ENCODE measurements at regions of chr14 and their contacts with region 1.

Region 1: DNA sequence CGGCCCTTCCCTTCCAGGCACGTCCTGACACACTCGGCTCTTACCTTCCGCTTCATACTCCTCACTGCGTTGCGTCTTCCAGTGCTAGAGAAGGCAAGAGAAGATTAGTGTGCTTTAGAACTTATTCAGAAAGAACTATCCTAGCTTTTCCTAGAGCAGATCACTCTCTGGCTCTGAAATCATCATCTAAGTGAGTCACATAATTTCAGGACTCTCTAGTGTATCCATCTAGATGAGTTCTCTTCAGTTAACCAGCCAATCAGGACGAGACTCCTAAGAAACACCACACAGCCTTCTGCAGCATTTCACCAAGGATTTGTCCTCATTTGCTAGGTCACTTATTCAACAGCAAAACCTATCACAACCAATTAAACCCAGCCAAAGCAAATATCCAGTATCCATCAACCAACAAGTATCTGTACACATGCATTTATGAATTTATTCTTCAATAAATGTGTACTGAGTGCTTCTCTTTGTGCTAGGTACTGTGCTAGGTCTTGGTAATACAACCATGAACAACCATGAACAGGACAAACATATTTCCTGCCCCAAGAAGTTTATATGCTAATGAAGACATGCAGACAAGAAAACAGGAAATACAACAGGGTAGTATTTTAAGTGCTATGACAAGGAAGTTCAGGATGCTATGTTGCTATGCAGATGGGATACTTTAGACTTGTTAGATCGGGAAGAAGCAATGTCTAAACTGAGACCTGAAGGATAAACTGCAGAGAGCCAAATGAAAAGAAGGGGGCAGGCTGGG is 52.1 kb downstream of the NIN start:
- DNase-seq: no peak
- ATAC-seq: no peak
- H3K4me3 ChIP-seq: no peak overlapping the region
- H3K27ac ChIP-seq: no peak overlapping the region; the same call in 1 of the 2 replicates
- H3K4me1 ChIP-seq: no peaks in the 10 kb centered on the region; the same call in 1 of the 2 replicates
- H3K27me3 ChIP-seq: no peaks in the 10 kb centered on the region
- CTCF ChIP-seq: no peak
- EP300 ChIP-seq: no peak
- POLR2A ChIP-seq: no peak
- RAD21 ChIP-seq: no peak

Region 2: GRCh38 chr14:50569714-50570274 is 209.1 kb before region 1 on chr14:
- CTCF ChIA-PET with region 1: interaction called, 11 read pairs
- POLR2A ChIA-PET with region 1: no interaction called
- RAD21 ChIA-PET with region 1: interaction called, 3 read pairs
- SMC1A ChIA-PET with region 1: interaction called, 3 read pairs
- in situ Hi-C with region 1: no loop called
- intact Hi-C with region 1: no loop called
- DNase-seq: no peak
- ATAC-seq: no peak
- H3K4me3 ChIP-seq: no peak overlapping the region
- H3K27ac ChIP-seq: no peak overlapping the region
- H3K4me1 ChIP-seq: no peaks in the 10 kb centered on the region
- H3K27me3 ChIP-seq: no peaks in the 10 kb centered on the region
- CTCF ChIP-seq: no peak
- EP300 ChIP-seq: no peak
- POLR2A ChIP-seq: no peak
- RAD21 ChIP-seq: no peak

Region 3: DNA sequence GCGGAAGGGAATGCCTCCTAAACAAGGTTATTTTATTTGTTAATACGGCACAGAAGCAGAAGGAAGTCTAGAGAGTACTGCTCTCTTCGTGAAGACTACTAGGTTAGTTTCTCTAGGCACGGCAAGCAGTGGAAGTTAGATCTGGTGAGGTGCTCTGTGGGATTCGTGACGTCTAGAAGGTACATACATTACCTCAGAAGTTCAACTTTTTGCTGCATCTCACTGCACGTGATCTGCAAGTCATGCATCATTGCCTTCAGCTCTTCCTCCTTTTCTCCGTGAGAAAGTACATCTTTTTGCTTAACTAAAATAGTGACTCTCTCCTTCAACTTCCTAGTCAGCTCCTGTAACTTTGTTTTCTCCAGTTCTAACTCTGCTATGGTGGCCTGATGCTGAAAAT is 22.6 kb before region 1 on chr14:
- CTCF ChIA-PET with region 1: interaction called, 140 read pairs
- POLR2A ChIA-PET with region 1: no interaction called
- RAD21 ChIA-PET with region 1: interaction called, 4 read pairs
- SMC1A ChIA-PET with region 1: interaction called, 87 read pairs
- in situ Hi-C with region 1: no loop called
- intact Hi-C with region 1: no loop called
- DNase-seq: no peak
- ATAC-seq: peak; percentile 75
- H3K4me3 ChIP-seq: no peak overlapping the region
- H3K27ac ChIP-seq: peak overlapping the region; percentile 51
- H3K4me1 ChIP-seq: peaks cover 11% of the 10 kb centered on the region
- H3K27me3 ChIP-seq: no peaks in the 10 kb centered on the region
- CTCF ChIP-seq: no peak
- EP300 ChIP-seq: no peak
- POLR2A ChIP-seq: no peak
- RAD21 ChIP-seq: no peak

Region 4: GRCh38 chr14:50830932-50831725 is 52.2 kb after region 1 on chr14 and contains the start of gene NIN:
- CTCF ChIA-PET with region 1: interaction called, 15 read pairs
- POLR2A ChIA-PET with region 1: no interaction called
- RAD21 ChIA-PET with region 1: interaction called, 21 read pairs
- SMC1A ChIA-PET with region 1: interaction called, 360 read pairs
- in situ Hi-C with region 1: no loop called
- intact Hi-C with region 1: no loop called
- DNase-seq: no peak
- ATAC-seq: peak; percentile 89
- H3K4me3 ChIP-seq: peak within 1 kb of the TSS; percentile 96
- H3K27ac ChIP-seq: peak within 1 kb of the TSS; percentile 87
- H3K4me1 ChIP-seq: peaks cover 26% of the 10 kb centered on the region
- H3K27me3 ChIP-seq: no peaks in the 10 kb centered on the region
- CTCF ChIP-seq: no peak
- EP300 ChIP-seq: no peak
- POLR2A ChIP-seq: peak; percentile 72
- RAD21 ChIP-seq: no peak
- polyA plus RNA-seq, gene NIN: 16.2 to 17.0 TPM